H1 (cell line): ENCODE measurements at regions of chr6 and their contacts with region 1.

Region 1: GRCh38 chr6:53986165-53986720 is 125.0 kb upstream of the MLIP start:
- DNase-seq: no peak
- H3K4me3 ChIP-seq: no peak overlapping the region
- H3K27ac ChIP-seq: no peak overlapping the region
- H3K4me1 ChIP-seq: peaks cover 0 to 7% (median under 1%) of the 10 kb centered on the region in 4 experiments; a peak in 3 of 7 replicates
- H3K27me3 ChIP-seq: no peaks in the 10 kb centered on the region
- CTCF ChIP-seq: peak in 2 of 3 experiments; percentile 72 to 74; a peak in 3 of 4 replicates
- EP300 ChIP-seq: no peak
- POLR2A ChIP-seq: no peak
- RAD21 ChIP-seq: peak; percentile 93 to 96

Region 2: GRCh38 chr6:53811082-53811481 is 175.2 kb before region 1 on chr6:
- CTCF ChIA-PET with region 1: no interaction called
- POLR2A ChIA-PET with region 1: no interaction called
- DNase-seq: no peak
- H3K4me3 ChIP-seq: no peak overlapping the region
- H3K27ac ChIP-seq: no peak overlapping the region
- H3K4me1 ChIP-seq: peaks cover 0 to 20% (median 10%) of the 10 kb centered on the region in 4 experiments; a peak in 6 of 7 replicates
- H3K27me3 ChIP-seq: no peaks in the 10 kb centered on the region
- CTCF ChIP-seq: no peak
- EP300 ChIP-seq: no peak
- POLR2A ChIP-seq: no peak
- RAD21 ChIP-seq: no peak

Region 3: GRCh38 chr6:53938810-53939209 is 47.4 kb before region 1 on chr6:
- CTCF ChIA-PET with region 1: no interaction called
- POLR2A ChIA-PET with region 1: no interaction called
- DNase-seq: no peak
- H3K4me3 ChIP-seq: no peak overlapping the region
- H3K27ac ChIP-seq: no peak overlapping the region
- H3K4me1 ChIP-seq: no peaks in the 10 kb centered on the region
- H3K27me3 ChIP-seq: no peaks in the 10 kb centered on the region
- CTCF ChIP-seq: no peak
- EP300 ChIP-seq: no peak
- POLR2A ChIP-seq: no peak
- RAD21 ChIP-seq: no peak

Region 4: DNA sequence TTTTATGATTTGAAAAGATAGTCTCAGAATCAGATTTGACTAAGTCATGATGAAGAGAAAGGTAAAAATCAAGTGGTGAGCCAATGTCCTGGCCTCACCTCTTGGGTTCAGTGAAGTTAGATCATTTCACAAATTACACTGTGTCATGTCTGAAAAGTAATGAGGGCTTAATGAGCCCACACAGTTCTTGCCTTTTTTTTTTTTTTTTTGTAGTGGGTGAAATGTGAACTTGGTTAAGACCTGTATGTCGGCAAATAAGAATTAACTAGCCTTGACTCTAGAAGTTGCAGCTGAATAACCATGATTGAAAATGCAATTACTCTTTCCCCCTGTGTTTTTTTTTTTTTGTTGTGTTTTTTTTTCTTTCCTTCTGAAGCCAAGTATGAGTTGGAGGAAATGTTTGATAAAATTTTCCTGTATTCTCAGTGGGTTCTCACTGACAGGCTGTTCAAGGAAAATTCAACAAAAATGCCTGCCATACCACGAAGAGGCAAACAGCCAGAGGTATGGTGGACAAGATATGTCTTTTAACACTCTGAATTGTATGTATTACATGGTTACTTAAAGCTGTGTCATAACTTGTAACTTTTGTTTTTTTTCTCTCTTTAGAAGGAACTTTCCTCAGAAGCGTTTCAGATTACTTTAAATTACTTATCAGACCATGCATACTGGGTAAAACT is 10.2 kb before region 1 on chr6:
- CTCF ChIA-PET with region 1: interaction called, 15 read pairs
- POLR2A ChIA-PET with region 1: no interaction called
- DNase-seq: no peak
- H3K4me3 ChIP-seq: no peak overlapping the region
- H3K27ac ChIP-seq: no peak overlapping the region
- H3K4me1 ChIP-seq: peaks cover 0 to 2% (median 0%) of the 10 kb centered on the region in 4 experiments; a peak in 2 of 7 replicates
- H3K27me3 ChIP-seq: no peaks in the 10 kb centered on the region
- CTCF ChIP-seq: no peak
- EP300 ChIP-seq: no peak
- POLR2A ChIP-seq: no peak
- RAD21 ChIP-seq: no peak

Region 5: DNA sequence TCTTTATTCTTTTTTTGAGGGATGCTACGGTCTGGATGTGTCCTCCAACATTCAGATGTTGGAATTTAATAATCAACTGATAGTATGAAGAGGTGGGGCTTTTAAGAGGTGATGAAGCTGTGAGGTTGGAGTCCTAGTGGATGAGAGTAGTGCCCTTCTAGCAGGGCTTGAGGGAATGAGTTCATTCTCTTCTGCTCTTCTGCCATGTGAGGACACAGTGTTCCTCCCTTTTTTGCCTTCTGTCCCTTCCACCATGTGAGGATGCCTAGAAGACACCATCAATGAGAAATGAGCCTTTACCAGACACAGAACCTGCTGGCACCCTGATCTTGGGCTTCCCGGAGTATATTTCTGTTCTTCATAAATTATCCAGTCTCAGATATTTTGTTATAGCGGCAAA is 42.9 kb after region 1 on chr6:
- CTCF ChIA-PET with region 1: interaction called, 15 read pairs
- POLR2A ChIA-PET with region 1: no interaction called
- DNase-seq: no peak
- H3K4me3 ChIP-seq: no peak overlapping the region
- H3K27ac ChIP-seq: no peak overlapping the region
- H3K4me1 ChIP-seq: no peaks in the 10 kb centered on the region
- H3K27me3 ChIP-seq: no peaks in the 10 kb centered on the region
- CTCF ChIP-seq: no peak
- EP300 ChIP-seq: no peak
- POLR2A ChIP-seq: no peak
- RAD21 ChIP-seq: no peak

Region 6: GRCh38 chr6:54244430-54244829 is 258.2 kb after region 1 on chr6:
- CTCF ChIA-PET with region 1: interaction called, 36 read pairs
- POLR2A ChIA-PET with region 1: no interaction called
- DNase-seq: no peak
- H3K4me3 ChIP-seq: no peak overlapping the region
- H3K27ac ChIP-seq: no peak overlapping the region
- H3K4me1 ChIP-seq: no peaks in the 10 kb centered on the region
- H3K27me3 ChIP-seq: no peaks in the 10 kb centered on the region
- CTCF ChIP-seq: peak in 2 of 3 experiments; percentile 26 to 51; a peak in 2 of 4 replicates
- EP300 ChIP-seq: no peak
- POLR2A ChIP-seq: no peak
- RAD21 ChIP-seq: peak; percentile 38 to 43

Region 7: DNA sequence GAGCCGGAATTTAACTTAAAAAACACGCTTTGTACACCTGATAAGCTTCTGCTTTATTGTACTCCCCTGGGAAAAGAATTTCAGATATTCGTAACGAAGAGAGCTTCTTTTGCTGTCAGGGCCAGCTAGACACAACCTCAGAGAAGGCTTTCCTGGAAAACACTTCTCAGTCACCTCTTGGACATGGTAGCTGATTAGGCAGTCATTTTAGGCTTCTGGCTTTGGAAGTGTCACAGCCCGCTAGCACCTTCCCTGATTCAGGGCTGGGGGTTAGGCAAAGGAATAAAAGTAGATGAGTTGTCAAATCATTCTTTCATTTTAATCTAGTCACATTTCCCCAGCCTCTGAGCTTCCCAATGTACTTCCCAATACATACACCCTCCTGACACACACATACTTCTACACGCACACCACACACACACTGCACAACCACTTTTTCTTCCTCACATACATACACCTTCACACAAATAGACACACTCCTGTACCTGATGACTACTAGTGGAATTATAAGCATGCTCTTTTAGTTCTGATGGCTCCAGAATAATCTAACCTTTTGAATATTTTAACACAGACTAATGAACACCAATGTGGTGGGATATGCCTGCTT is 287.1 kb after region 1 on chr6:
- CTCF ChIA-PET with region 1: interaction called, 100 read pairs
- POLR2A ChIA-PET with region 1: no interaction called
- DNase-seq: no peak
- H3K4me3 ChIP-seq: no peak overlapping the region
- H3K27ac ChIP-seq: no peak overlapping the region
- H3K4me1 ChIP-seq: no peaks in the 10 kb centered on the region
- H3K27me3 ChIP-seq: no peaks in the 10 kb centered on the region
- CTCF ChIP-seq: no peak
- EP300 ChIP-seq: no peak
- POLR2A ChIP-seq: no peak
- RAD21 ChIP-seq: no peak